ENCODE measurements at regions of chr20 and their contacts with region 1.

Region 1: GRCh38 chr20:41339507-41340326 is 904 bp upstream of the LPIN3 start:
- DNase-seq: peak; percentile 86
- CTCF ChIP-seq: peak; percentile 97

Region 2: GRCh38 chr20:40293740-40294139 is 1046.0 kb before region 1 on chr20:
- in situ Hi-C with region 1: no loop called
- DNase-seq: no peak
- CTCF ChIP-seq: no peak

Region 3: DNA sequence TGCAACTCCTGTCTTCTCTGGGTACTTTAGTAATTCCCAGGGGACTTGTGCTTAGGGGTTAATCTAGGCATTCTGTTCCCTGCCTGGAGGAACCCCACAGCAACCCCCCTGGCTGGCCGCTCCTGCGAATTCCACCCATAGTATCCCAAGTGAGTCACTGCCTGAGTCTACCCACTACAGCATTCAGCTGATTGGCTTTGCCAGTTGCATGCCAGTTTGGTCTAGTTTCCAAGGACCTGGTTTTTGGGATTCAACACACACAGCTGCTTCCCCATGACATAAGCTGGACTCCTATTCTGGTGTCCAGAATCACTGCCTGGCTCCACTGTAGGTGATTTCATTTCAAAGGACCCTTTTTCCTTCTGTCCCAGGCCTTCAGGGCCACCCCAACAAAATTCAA is 162.1 kb before region 1 on chr20:
- in situ Hi-C with region 1: loop called (anchors 5 kb)
- DNase-seq: no peak
- CTCF ChIP-seq: no peak